Thyroid gland (tissue), 4 donors: ENCODE measurements at regions of chr21 and their contacts with region 1.

Region 1: DNA sequence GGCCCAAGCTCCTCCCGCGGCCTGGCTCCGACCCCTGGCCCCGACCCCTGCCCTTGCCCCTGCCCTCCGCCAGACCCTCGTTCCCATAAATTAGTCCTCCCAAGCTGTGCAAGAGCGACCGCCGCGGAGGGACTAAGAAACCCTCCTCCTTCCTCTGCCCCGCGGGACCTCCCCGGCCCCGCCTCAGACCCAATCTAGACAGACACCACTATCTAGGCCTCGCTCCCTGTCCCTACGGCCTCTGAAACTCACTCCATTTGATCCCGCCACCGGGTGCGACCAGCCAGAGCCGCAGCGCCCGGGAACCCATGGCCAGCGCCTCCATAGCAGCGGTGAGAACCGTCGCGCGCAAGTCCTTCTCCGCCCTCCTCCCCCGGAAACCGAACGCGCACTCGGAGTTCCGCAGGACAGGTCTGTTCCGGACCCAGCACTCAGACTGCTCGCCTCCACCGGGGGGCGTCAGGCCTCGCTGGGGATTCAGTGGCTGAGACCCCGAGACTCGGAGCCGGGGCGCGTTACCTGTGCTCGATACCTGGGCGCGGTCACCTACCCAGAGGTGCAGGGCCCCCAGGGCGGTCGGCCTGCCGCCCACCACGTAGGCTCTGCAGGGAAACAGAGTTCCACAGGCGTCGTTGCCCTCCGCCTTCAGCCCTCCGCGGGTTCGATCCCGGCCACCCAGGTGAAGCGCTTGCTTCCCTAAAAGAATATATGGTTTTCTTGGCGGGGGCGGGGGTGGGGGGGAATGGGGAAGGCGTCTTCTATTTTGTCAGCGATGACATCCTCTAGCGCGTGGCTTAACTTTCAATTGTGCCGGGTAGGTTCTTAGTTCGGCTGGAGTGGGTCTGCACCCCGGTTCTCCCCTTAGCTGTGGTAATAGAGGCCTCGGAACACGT is at the start of gene MRPL39:
- DNase-seq: peak; percentile 79 to 84
- H3K4me3 ChIP-seq: peak within 1 kb of the TSS; percentile 78 to 98 (median 88)
- H3K27ac ChIP-seq: peak within 1 kb of the TSS; percentile 59 to 94 (median 81)
- H3K4me1 ChIP-seq: peaks cover 12 to 14% of the 10 kb centered on the region in 2 donors
- H3K27me3 ChIP-seq: no peaks in the 10 kb centered on the region
- CTCF ChIP-seq: peak in 5 of 6 experiments; percentile 27 to 52 (median 33)
- POLR2A ChIP-seq: peak in 1 of 2 donors; percentile 43
- total RNA-seq, gene MRPL39: 16.1 to 23.0 (median 19.9) TPM

Region 2: GRCh38 chr21:25708467-25709065 is 101.2 kb after region 1 on chr21:
- intact Hi-C with region 1: loop called (anchors 2 kb)
- DNase-seq: peak; percentile 37 to 39
- H3K4me3 ChIP-seq: no peak overlapping the region
- H3K27ac ChIP-seq: no peak overlapping the region
- H3K4me1 ChIP-seq: no peaks in the 10 kb centered on the region
- H3K27me3 ChIP-seq: no peaks in the 10 kb centered on the region
- CTCF ChIP-seq: peak; percentile 50 to 81 (median 62)
- POLR2A ChIP-seq: no peak